Mammary epithelial cell (primary cell): ENCODE measurements at regions of chr2 and their contacts with region 1.

Region 1: DNA sequence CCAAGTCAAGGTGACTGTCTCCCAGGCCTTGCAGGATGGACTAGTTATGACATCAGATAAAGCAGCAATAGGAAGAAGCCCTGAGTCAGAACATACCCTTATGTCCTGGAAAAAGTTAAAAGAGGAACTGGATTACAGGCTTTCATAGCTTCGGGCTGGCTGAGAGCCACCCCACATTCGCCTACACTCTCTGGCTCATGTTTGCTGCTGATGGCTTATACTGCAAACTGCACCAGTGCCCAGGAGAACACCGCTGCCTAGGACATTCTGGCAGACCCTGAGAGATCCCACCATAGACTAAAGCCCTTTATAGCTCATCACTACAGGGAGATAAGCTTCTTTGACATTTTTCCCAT is 20.3 kb downstream of the SLC8A1 start:
- DNase-seq: peak; percentile 67
- H3K4me3 ChIP-seq: no peak overlapping the region
- H3K27ac ChIP-seq: peak overlapping the region; percentile 23
- H3K4me1 ChIP-seq: peaks cover 55% of the 10 kb centered on the region
- H3K27me3 ChIP-seq: no peaks in the 10 kb centered on the region
- CTCF ChIP-seq: peak in 1 of 2 donors; percentile 0

Region 2: GRCh38 chr2:40101131-40101575 is 330.4 kb before region 1 on chr2:
- CTCF ChIA-PET with region 1: no interaction called
- dilution Hi-C with region 1: no loop called
- in situ Hi-C with region 1: no loop called
- intact Hi-C with region 1: loop called (anchors 10 kb)
- DNase-seq: no peak
- H3K4me3 ChIP-seq: no peak overlapping the region
- H3K27ac ChIP-seq: no peak overlapping the region
- H3K4me1 ChIP-seq: peaks cover 51% of the 10 kb centered on the region
- H3K27me3 ChIP-seq: no peaks in the 10 kb centered on the region
- CTCF ChIP-seq: no peak

Region 3: GRCh38 chr2:40363631-40364030 is 67.9 kb before region 1 on chr2:
- CTCF ChIA-PET with region 1: no interaction called
- dilution Hi-C with region 1: no loop called
- in situ Hi-C with region 1: no loop called
- intact Hi-C with region 1: loop called (anchors 5 kb)
- DNase-seq: no peak
- H3K4me3 ChIP-seq: no peak overlapping the region
- H3K27ac ChIP-seq: peak overlapping the region; percentile 51
- H3K4me1 ChIP-seq: peaks cover 13% of the 10 kb centered on the region
- H3K27me3 ChIP-seq: no peaks in the 10 kb centered on the region
- CTCF ChIP-seq: no peak

Region 4: GRCh38 chr2:40401896-40402295 is 29.7 kb before region 1 on chr2:
- CTCF ChIA-PET with region 1: no interaction called
- dilution Hi-C with region 1: no loop called
- in situ Hi-C with region 1: no loop called
- intact Hi-C with region 1: loop called (anchors 1 kb)
- DNase-seq: peak; percentile 90
- H3K4me3 ChIP-seq: peak overlapping the region in 1 of 3 experiments; percentile 15
- H3K27ac ChIP-seq: peak overlapping the region; percentile 88
- H3K4me1 ChIP-seq: peaks cover 47% of the 10 kb centered on the region
- H3K27me3 ChIP-seq: no peaks in the 10 kb centered on the region
- CTCF ChIP-seq: no peak

Region 5: GRCh38 chr2:40412456-40412855 is 19.1 kb before region 1 on chr2:
- CTCF ChIA-PET with region 1: no interaction called
- dilution Hi-C with region 1: no loop called
- in situ Hi-C with region 1: no loop called
- intact Hi-C with region 1: loop called (anchors 2 kb)
- DNase-seq: peak; percentile 82
- H3K4me3 ChIP-seq: no peak overlapping the region
- H3K27ac ChIP-seq: peak overlapping the region; percentile 47
- H3K4me1 ChIP-seq: peaks cover 16% of the 10 kb centered on the region
- H3K27me3 ChIP-seq: no peaks in the 10 kb centered on the region
- CTCF ChIP-seq: no peak

Region 6: GRCh38 chr2:40511661-40512213 is 80.2 kb after region 1 on chr2:
- CTCF ChIA-PET with region 1: no interaction called
- dilution Hi-C with region 1: no loop called
- in situ Hi-C with region 1: no loop called
- intact Hi-C with region 1: no loop called
- DNase-seq: peak; percentile 2
- H3K4me3 ChIP-seq: no peak overlapping the region
- H3K27ac ChIP-seq: no peak overlapping the region
- H3K4me1 ChIP-seq: no peaks in the 10 kb centered on the region
- H3K27me3 ChIP-seq: no peaks in the 10 kb centered on the region
- CTCF ChIP-seq: no peak